ENCODE measurements at regions of chr9 and their contacts with region 1.

Region 1: DNA sequence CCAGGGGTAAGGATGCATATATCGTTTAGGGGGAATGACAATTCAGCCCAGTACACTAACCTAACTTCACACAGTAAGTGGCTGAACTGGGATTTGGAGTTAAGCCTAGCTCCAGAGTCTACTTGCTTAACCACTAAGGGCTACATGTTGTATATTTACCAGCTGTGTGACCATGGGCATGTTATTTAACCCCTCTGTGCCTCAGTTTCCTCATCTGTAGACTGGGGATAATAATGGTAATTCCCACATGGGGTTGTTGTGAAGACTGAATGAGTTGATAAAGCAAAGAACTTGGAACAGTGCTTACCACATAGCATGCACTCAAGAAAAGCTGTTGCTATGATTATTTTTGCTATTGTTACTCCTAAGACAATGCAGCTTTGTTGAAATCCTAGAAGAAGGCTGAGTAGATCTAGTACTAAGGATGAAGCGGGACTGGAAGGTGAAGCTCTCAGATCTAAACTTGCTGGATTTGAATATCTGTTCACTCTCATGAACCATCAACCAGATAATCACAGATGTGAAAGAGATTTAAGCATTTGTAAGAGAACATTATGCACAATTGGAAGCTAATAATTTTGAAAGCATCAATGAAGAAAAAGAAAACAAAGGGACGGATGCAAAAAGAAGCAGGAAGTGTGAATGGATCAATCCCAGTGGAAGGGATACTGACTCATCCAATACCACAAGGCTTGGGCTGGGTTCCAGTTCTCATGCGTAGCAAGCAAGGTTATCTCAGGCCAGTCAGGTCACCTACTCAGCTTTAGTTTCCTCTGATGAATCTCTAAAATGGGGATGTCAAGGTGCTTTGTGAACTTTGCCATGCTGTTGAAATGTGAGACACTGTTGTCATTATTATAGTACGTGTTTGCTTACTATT is 78.5 kb upstream of the TBC1D2 start:
- DNase-seq: peak; percentile 94
- H3K4me3 ChIP-seq: no peak overlapping the region
- H3K27ac ChIP-seq: peak overlapping the region; percentile 98
- H3K4me1 ChIP-seq: peaks cover 41% of the 10 kb centered on the region
- H3K27me3 ChIP-seq: no peaks in the 10 kb centered on the region
- CTCF ChIP-seq: no peak
- POLR2A ChIP-seq: peak; percentile 80

Region 2: DNA sequence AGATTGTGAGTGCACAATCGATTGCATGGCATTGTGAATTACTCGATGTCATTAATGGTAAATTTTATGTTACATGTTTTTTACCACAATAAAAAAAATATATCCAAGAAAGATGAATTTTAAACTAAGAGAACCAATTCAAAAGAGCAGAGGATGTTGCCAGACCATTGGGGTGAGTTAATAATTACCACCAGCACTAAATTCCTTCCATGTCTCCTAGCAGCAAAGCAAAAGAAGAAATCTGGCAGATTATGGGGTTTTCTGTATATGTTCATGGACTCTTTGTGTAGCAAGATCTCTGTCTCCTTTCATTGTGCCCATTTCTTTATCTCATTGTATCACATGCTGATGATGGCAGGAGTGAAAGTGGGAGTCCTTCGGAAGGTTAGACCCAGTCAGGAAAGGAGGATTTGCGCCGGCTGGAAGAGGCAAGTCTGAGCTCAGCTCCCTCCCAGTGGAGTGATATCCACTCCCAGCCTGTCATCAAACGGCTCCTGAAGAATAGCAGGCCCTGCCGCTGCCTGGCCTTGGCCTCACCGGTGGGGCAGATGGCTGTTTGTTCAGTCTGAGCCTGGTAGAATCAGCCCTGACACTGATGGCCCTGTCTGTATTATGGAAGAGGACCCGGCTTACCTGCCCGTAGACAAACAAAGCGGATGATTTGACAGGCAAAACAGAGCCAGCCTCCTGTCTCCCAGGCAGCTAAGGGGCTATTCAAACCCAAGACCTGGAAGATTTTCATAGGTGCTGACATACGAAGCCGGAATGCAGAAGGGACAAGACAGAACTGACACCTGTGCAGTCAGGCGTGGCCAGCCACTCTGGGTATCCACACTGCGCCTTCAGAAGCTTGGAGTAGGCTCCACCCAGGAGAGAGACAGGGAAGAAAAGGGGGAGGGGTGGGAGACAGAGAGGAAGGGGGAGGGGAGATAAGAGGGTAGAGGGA is 502.8 kb before region 1 on chr9:
- CTCF ChIA-PET with region 1: no interaction called
- POLR2A ChIA-PET with region 1: no interaction called
- dilution Hi-C with region 1: no loop called
- intact Hi-C with region 1: no loop called
- DNase-seq: no peak
- H3K4me3 ChIP-seq: no peak overlapping the region
- H3K27ac ChIP-seq: no peak overlapping the region
- H3K4me1 ChIP-seq: no peaks in the 10 kb centered on the region
- H3K27me3 ChIP-seq: peaks cover 22 to 35% of the 10 kb centered on the region in 2 experiments
- CTCF ChIP-seq: no peak
- POLR2A ChIP-seq: no peak

Region 3: DNA sequence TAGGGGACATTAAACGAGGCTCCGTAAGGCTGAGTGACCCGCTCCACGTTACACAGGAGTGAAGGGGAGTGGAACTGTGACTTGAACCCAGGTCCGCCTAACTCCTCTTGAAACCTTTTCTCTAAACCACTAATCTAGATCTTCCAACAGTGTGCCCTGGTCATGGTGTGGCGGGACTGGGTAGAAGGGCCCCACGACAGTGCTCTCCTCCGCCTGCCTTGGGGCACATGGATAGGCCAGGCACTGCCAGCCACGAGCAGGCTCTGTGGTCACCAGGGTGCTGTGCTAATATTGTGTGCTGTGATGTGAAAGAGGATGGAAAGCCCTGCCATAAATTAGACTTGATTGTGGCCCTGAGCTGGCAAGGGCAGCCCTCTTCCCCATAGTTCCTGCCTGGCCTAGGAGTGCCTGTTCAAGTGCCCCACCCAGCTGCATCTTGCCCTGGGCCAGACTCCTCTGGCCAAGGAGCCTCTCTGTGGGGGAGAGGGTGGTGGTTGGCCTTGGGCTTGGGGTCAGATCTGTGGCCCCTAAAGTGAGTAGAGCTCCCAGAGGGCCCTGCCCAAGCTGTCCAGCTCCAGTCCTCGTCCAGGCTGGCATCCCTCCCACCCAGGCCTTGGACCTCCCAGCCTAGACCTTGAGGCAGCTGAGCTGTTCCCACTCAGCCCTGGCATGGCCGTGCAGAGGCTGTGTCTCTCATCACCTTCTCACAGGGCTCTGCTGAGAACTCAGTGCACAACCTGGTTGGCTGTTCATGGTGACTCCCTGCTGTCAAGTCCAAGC is 10.7 kb before region 1 on chr9:
- CTCF ChIA-PET with region 1: interaction called, 10 read pairs
- POLR2A ChIA-PET with region 1: no interaction called
- dilution Hi-C with region 1: no loop called
- intact Hi-C with region 1: loop called (anchors 1 kb)
- DNase-seq: no peak
- H3K4me3 ChIP-seq: no peak overlapping the region
- H3K27ac ChIP-seq: peak overlapping the region; percentile 84
- H3K4me1 ChIP-seq: peaks cover 22% of the 10 kb centered on the region
- H3K27me3 ChIP-seq: no peaks in the 10 kb centered on the region
- CTCF ChIP-seq: no peak
- POLR2A ChIP-seq: no peak

Region 4: DNA sequence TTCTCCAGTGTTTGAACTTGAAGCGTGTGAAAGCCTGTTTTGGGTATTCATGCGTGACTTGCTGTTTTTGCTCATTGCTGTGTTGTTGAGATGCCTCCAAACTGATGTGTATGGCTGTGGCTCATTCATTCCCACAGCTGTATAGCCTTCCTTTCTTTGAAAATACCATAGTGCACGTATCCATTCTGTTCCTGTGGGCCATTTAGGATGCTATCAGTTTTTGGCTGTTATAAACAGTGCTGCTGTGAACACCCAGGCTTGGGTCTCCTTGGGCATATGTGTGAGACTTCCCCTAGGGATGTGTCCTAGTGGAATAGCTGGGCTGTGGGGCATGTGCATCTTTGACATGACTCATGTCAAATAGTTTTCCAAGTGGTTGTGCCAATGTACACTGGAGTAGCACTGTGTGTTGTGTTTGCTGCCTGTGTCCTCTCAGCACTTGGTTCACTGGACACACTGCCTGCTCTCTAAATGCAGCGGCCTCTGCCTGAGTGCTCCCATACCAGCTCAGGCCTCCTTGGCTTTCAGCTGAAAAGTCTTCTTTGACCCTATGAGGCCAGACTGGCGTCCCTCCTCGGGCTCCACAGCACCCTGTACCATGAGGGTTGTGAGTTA is 24.1 kb after region 1 on chr9:
- CTCF ChIA-PET with region 1: interaction called, 22 read pairs
- POLR2A ChIA-PET with region 1: no interaction called
- dilution Hi-C with region 1: no loop called
- intact Hi-C with region 1: loop called (anchors 1 kb)
- DNase-seq: peak; percentile 73
- H3K4me3 ChIP-seq: no peak overlapping the region
- H3K27ac ChIP-seq: peak overlapping the region; percentile 92
- H3K4me1 ChIP-seq: peaks cover 30% of the 10 kb centered on the region
- H3K27me3 ChIP-seq: no peaks in the 10 kb centered on the region
- CTCF ChIP-seq: no peak
- POLR2A ChIP-seq: no peak

Region 5: GRCh38 chr9:98365227-98365669 is 31.3 kb after region 1 on chr9:
- CTCF ChIA-PET with region 1: interaction called, 22 read pairs
- POLR2A ChIA-PET with region 1: no interaction called
- dilution Hi-C with region 1: no loop called
- intact Hi-C with region 1: loop called (anchors 2 kb)
- DNase-seq: peak; percentile 85
- H3K4me3 ChIP-seq: no peak overlapping the region
- H3K27ac ChIP-seq: no peak overlapping the region
- H3K4me1 ChIP-seq: peaks cover 4% of the 10 kb centered on the region
- H3K27me3 ChIP-seq: no peaks in the 10 kb centered on the region
- CTCF ChIP-seq: peak; percentile 49 to 72
- POLR2A ChIP-seq: no peak

Region 6: GRCh38 chr9:98523231-98523896 is 189.4 kb after region 1 on chr9:
- CTCF ChIA-PET with region 1: interaction called, 4 read pairs
- POLR2A ChIA-PET with region 1: no interaction called
- dilution Hi-C with region 1: no loop called
- intact Hi-C with region 1: loop called (anchors 2 kb)
- DNase-seq: peak; percentile 30
- H3K4me3 ChIP-seq: no peak overlapping the region
- H3K27ac ChIP-seq: peak overlapping the region; percentile 60
- H3K4me1 ChIP-seq: peaks cover 34% of the 10 kb centered on the region
- H3K27me3 ChIP-seq: no peaks in the 10 kb centered on the region
- CTCF ChIP-seq: peak; percentile 17 to 45
- POLR2A ChIP-seq: no peak

Region 7: GRCh38 chr9:98607787-98608186 is 273.8 kb after region 1 on chr9:
- CTCF ChIA-PET with region 1: interaction called, 3 read pairs
- POLR2A ChIA-PET with region 1: no interaction called
- dilution Hi-C with region 1: no loop called
- intact Hi-C with region 1: loop called (anchors 5 kb)
- DNase-seq: peak; percentile 91
- H3K4me3 ChIP-seq: peak overlapping the region in 1 of 3 experiments; percentile 26
- H3K27ac ChIP-seq: peak overlapping the region; percentile 97
- H3K4me1 ChIP-seq: peaks cover 30% of the 10 kb centered on the region
- H3K27me3 ChIP-seq: no peaks in the 10 kb centered on the region
- CTCF ChIP-seq: no peak
- POLR2A ChIP-seq: no peak

Measured in endothelial cell of umbilical vein (primary cell).